ENCODE measurements at regions of chr9 and their contacts with region 1.

Region 1: DNA sequence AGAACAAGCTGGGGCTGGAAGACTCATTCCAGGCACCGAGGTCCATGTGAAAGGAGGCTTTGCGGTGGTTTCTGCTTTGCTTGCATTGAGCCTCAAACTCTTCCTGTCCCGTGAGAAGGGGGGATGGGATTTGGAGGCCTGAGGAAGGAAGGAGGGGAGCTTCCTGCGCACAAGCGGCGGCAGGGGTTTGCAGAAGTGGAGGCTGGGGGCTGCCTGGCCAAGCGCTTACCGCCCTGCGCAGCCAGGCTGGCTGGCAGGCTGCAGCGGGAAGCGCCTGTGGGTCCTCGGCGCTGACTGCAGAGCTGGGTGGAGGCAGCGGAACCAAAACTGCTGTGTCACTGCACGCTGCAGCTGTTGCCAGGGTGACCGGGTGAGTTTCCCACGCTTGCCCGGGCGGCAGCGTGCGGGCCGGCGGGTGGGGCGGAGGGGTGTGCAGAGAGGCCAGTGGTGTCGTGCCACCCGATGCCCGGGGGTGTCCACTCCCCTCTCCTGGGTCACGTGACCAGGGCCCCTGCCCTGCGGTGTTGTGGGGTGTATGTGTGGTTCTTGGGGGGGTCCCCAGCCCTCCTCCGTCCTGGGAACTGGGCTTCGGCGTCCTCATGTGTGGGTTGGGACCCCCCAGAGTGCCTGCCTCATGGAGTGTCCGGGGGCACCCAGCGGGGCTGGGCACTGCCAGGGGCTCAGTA is 81.0 kb downstream of the RXRA start:
- DNase-seq: peak; percentile 88
- ATAC-seq: peak; percentile 91
- H3K4me3 Mint-ChIP-seq: peak overlapping the region; percentile 34
- H3K27ac Mint-ChIP-seq: peak overlapping the region; percentile 38
- H3K4me1 Mint-ChIP-seq: peaks cover 31% of the 10 kb centered on the region
- H3K27me3 Mint-ChIP-seq: peaks cover 18% of the 10 kb centered on the region

Region 2: GRCh38 chr9:134391314-134392231 is 15.7 kb before region 1 on chr9:
- CTCF ChIA-PET with region 1: interaction called, 16 read pairs
- DNase-seq: peak; percentile 86
- ATAC-seq: peak; percentile 67
- H3K4me3 Mint-ChIP-seq: peak overlapping the region; percentile 66
- H3K27ac Mint-ChIP-seq: peak overlapping the region; percentile 79
- H3K4me1 Mint-ChIP-seq: peaks cover 56% of the 10 kb centered on the region
- H3K27me3 Mint-ChIP-seq: peaks cover 11% of the 10 kb centered on the region

Region 3: DNA sequence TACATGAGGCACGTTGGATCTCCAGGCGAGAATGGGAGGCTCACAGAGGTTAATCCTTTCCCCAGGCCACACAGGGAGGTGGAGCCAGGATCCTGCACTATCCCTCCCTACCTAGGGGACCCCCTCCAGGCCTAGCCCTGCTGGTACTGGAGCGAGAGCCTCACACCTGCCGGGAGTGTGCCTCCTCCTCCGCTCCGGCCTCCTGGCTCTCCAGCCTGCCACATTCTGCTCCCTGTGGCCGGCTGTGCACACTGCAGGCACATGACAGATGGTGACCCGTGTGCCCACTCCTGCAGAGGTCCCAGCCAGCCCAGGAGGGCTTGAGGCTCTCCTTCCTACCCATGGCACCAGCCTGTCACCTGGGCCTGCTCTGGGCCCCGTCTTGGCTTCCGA is 12.4 kb after region 1 on chr9:
- CTCF ChIA-PET with region 1: no interaction called
- DNase-seq: no peak
- ATAC-seq: peak; percentile 48
- H3K4me3 Mint-ChIP-seq: no peak overlapping the region
- H3K27ac Mint-ChIP-seq: no peak overlapping the region
- H3K4me1 Mint-ChIP-seq: no peaks in the 10 kb centered on the region
- H3K27me3 Mint-ChIP-seq: no peaks in the 10 kb centered on the region

Region 4: DNA sequence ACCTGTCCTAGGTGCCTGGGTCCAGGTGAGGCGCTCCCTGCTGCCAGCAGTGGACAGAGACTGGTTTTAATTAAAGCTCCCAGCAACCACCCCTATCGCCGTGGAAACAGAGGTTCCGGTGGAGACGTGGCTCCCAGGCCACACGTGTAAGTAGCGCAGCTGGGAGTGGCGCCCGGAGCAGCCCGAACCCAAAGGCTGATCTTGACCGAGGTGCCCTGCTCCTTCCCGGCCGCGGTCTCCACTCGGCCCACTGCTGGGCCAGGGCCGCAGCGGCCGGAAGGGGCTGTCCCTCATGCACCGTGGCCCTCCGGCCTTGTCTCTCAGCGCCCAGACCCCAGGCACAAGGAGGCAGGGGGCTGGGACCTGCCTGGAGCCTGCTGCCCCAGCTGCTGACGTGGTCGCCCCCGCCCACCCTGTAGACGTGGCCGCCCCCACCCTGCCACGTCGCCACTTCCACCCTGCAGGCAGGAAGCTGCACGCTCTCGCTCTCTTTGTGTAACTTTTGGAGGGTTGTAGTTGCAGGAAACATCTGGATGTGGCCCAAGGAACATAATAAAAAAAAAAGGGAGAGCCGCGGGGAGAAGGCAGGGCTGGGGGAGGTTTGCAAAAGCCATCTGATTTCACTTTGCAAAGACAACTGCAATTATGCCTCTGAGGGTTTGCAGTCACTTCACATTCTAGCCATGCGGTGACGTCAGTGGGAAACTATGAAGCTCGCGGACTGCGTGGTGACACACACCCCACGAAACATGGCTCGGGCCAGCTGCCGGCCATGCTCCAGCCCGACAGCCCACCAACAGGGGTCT is 48.9 kb after region 1 on chr9:
- CTCF ChIA-PET with region 1: no interaction called
- DNase-seq: peak; percentile 83
- ATAC-seq: peak; percentile 86
- H3K4me3 Mint-ChIP-seq: peak overlapping the region; percentile 56
- H3K27ac Mint-ChIP-seq: peak overlapping the region; percentile 74
- H3K4me1 Mint-ChIP-seq: peaks cover 7% of the 10 kb centered on the region
- H3K27me3 Mint-ChIP-seq: no peaks in the 10 kb centered on the region

Region 5: GRCh38 chr9:134602547-134603309 is 195.5 kb after region 1 on chr9:
- CTCF ChIA-PET with region 1: no interaction called
- DNase-seq: peak; percentile 9
- ATAC-seq: no peak
- H3K4me3 Mint-ChIP-seq: no peak overlapping the region
- H3K27ac Mint-ChIP-seq: no peak overlapping the region
- H3K4me1 Mint-ChIP-seq: no peaks in the 10 kb centered on the region
- H3K27me3 Mint-ChIP-seq: no peaks in the 10 kb centered on the region

Region 6: GRCh38 chr9:134660407-134660806 is 253.1 kb after region 1 on chr9:
- CTCF ChIA-PET with region 1: no interaction called
- DNase-seq: no peak
- ATAC-seq: no peak
- H3K4me3 Mint-ChIP-seq: no peak overlapping the region
- H3K27ac Mint-ChIP-seq: no peak overlapping the region
- H3K4me1 Mint-ChIP-seq: no peaks in the 10 kb centered on the region
- H3K27me3 Mint-ChIP-seq: no peaks in the 10 kb centered on the region

Measured in activated CD8-positive, alpha-beta memory T cell treated with anti-CD3 and anti-CD28 coated beads, Interleukin-2, amount 10 ng/mL, durations not matched to agents 7 days and 5 days (primary cell).